Activated T-helper 2 cell treated with anti-CD3 and anti-CD28 coated beads, Interferon-gamma antibody, Interleukin-2, Interleukin-4, amounts not matched to agents 10 μg/mL and 5 μg/mL and 100 μg/mL, durations not matched to agents 14 hours and 24 hours and 36 hours (primary cell): ENCODE measurements at regions of chr10 and their contacts with region 1.

Region 1: GRCh38 chr10:22436884-22437619 is 91.8 kb downstream of the SPAG6 start:
- DNase-seq: peak; percentile 82
- H3K4me3 Mint-ChIP-seq: peak overlapping the region; percentile 89
- H3K27ac Mint-ChIP-seq: peak overlapping the region; percentile 93
- H3K4me1 Mint-ChIP-seq: peaks cover 41% of the 10 kb centered on the region
- H3K27me3 Mint-ChIP-seq: peaks cover 9% of the 10 kb centered on the region

Region 2: DNA sequence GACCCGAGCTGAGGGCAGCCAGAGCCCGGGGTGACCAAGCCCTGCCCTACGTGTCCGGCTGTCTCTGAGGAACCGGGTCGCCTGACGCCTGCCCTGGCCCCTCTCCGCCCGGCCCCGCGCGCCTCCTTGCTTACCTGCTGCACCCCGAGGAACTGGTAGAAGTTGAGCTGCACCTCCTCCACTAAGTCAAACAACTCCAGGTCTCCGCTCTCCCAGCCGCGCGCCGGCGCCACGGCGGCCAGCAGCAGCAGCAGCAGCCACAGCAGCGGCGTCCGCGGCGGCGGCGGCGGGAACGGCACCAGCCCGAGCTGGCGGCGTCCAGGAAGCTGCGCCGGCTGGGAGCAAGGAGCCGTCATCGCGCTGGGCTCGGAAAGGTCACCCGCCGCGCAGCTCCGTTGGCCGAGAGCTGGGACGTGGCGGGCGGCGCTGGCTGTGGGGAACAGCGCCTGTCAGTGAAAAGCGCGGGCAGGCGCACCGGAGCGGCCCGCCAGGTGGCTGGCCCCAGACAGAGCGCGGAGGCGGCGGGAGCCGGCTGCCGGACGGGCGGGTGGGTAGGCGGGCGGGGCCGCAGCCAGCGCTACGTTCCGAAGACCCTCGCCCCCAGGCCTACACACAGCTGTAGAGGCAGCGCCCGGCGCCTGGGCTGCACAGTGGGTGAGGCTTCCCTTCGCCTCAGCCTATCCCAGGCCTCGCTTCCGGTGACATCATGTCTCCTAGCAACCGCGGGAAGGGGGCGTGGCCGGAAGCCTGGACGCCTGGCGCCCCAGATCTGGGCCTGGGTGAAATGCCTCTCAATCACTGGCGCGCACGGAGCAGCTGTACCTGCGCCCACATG is 433.8 kb before region 1 on chr10 and contains the start of gene DNAJC1:
- intact Hi-C with region 1: loop called (anchors 2 kb)
- DNase-seq: peak; percentile 96
- H3K4me3 Mint-ChIP-seq: peak within 1 kb of the TSS; percentile 96
- H3K27ac Mint-ChIP-seq: peak within 1 kb of the TSS; percentile 91
- H3K4me1 Mint-ChIP-seq: peaks cover 34% of the 10 kb centered on the region
- H3K27me3 Mint-ChIP-seq: peaks cover 12% of the 10 kb centered on the region
- total RNA-seq, gene DNAJC1: 24.0 and 24.5 TPM in 2 replicates

Region 3: DNA sequence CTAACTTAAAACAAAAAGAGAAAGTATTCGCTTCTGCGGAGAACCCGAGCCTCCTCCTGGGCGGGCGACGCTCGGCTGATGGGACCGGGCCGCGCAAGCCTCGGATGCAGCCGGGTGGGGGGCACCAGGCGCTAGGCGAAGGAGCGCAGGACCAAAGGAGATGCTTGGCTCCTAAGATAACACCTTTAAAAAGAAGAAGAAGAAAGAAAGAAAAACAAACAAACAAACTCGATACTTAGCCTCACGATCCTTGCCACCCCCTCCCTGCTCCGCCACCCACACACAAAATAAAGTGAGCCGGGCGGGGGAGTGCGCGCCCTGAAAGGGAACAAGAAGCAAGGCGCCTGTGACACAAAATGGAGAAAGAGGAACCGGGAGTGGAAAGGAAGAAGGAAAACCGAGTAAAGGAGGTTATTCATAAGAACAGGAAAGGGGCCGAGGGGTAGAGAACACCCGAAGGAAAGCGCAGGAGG is 185.3 kb before region 1 on chr10:
- intact Hi-C with region 1: loop called (anchors 2 kb)
- DNase-seq: peak; percentile 59
- H3K4me3 Mint-ChIP-seq: peak overlapping the region; percentile 94
- H3K27ac Mint-ChIP-seq: peak overlapping the region; percentile 100
- H3K4me1 Mint-ChIP-seq: peaks cover 30% of the 10 kb centered on the region
- H3K27me3 Mint-ChIP-seq: peaks cover 16% of the 10 kb centered on the region

Region 4: GRCh38 chr10:22369434-22370072 is 67.5 kb before region 1 on chr10:
- intact Hi-C with region 1: loop called (anchors 2 kb)
- DNase-seq: no peak
- H3K4me3 Mint-ChIP-seq: no peak overlapping the region
- H3K27ac Mint-ChIP-seq: no peak overlapping the region
- H3K4me1 Mint-ChIP-seq: peaks cover 42% of the 10 kb centered on the region
- H3K27me3 Mint-ChIP-seq: no peaks in the 10 kb centered on the region

Region 5: DNA sequence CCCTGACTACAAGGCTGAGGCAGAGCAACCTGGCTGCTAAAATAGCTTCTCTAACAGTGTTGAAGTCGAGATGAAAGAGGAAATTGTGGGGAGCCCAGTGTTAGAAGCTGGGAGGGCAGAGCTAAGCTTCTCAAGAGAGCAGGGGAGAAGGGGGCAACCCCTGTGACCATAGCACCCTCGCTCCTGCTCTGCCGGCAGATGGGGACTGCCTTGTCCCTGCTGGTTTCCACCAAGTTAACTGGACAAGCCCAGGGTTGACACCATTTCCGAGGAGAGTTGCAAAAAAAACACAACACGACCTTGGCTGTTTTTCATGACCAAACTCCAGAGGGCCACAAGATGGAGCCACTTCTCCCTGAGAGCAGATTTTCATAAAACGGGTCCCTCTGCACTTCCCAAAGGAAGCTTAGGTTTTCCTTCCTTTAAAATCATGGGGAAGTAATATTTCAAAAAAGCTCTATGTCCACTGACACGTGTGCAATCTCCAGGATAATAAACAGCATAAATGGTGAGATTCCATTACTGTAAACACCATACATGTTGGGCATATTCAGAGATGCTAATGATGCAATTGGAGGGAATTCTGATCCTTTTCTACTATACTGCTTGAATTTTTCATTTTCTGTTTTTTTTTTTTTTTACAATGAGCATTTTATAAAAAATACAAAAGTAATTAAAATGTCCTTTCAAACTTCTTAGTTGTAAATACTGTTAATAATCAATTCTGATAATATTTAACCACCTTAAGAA is 136.9 kb after region 1 on chr10:
- intact Hi-C with region 1: loop called (anchors 5 kb)
- DNase-seq: no peak
- H3K4me3 Mint-ChIP-seq: no peak overlapping the region
- H3K27ac Mint-ChIP-seq: peak overlapping the region; percentile 22
- H3K4me1 Mint-ChIP-seq: peaks cover 33% of the 10 kb centered on the region
- H3K27me3 Mint-ChIP-seq: no peaks in the 10 kb centered on the region

Region 6: GRCh38 chr10:23095404-23095965 is 658.4 kb after region 1 on chr10 and contains the start of gene MSRB2:
- intact Hi-C with region 1: loop called (anchors 10 kb)
- DNase-seq: peak; percentile 66
- H3K4me3 Mint-ChIP-seq: peak within 1 kb of the TSS; percentile 88
- H3K27ac Mint-ChIP-seq: peak within 1 kb of the TSS; percentile 83
- H3K4me1 Mint-ChIP-seq: peaks cover 41% of the 10 kb centered on the region
- H3K27me3 Mint-ChIP-seq: peaks cover 17% of the 10 kb centered on the region
- total RNA-seq, gene MSRB2: 4.0 and 4.4 TPM in 2 replicates